Activated CD4-positive, alpha-beta T cell treated with anti-CD3 and anti-CD28 coated beads for 36 hours (primary cell): ENCODE measurements at regions of chr1 and their contacts with region 1.

Region 1: GRCh38 chr1:206865013-206865671 is at the start of gene IL20:
- DNase-seq: peak; percentile 95
- ATAC-seq: peak; percentile 96
- H3K4me3 Mint-ChIP-seq: no peak within 1 kb of the TSS
- H3K27ac Mint-ChIP-seq: no peak within 1 kb of the TSS
- H3K4me1 Mint-ChIP-seq: peaks cover 18% of the 10 kb centered on the region
- H3K27me3 Mint-ChIP-seq: peaks cover 8% of the 10 kb centered on the region
- total RNA-seq, gene IL20: not detected

Region 2: GRCh38 chr1:206847337-206847834 is 17.8 kb before region 1 on chr1:
- CTCF ChIA-PET with region 1: interaction called, 11 read pairs
- POLR2A ChIA-PET with region 1: no interaction called
- intact Hi-C with region 1: no loop called
- DNase-seq: no peak
- ATAC-seq: no peak
- H3K4me3 Mint-ChIP-seq: no peak overlapping the region
- H3K27ac Mint-ChIP-seq: no peak overlapping the region
- H3K4me1 Mint-ChIP-seq: no peaks in the 10 kb centered on the region
- H3K27me3 Mint-ChIP-seq: no peaks in the 10 kb centered on the region

Region 3: GRCh38 chr1:206878456-206878855 is 13.3 kb after region 1 on chr1:
- CTCF ChIA-PET with region 1: interaction called, 20 read pairs
- POLR2A ChIA-PET with region 1: no interaction called
- intact Hi-C with region 1: no loop called
- DNase-seq: no peak
- ATAC-seq: no peak
- H3K4me3 Mint-ChIP-seq: no peak overlapping the region
- H3K27ac Mint-ChIP-seq: no peak overlapping the region
- H3K4me1 Mint-ChIP-seq: peaks cover 10% of the 10 kb centered on the region
- H3K27me3 Mint-ChIP-seq: no peaks in the 10 kb centered on the region

Region 4: GRCh38 chr1:206885341-206886060 is 20.4 kb after region 1 on chr1:
- CTCF ChIA-PET with region 1: interaction called, 13 read pairs
- POLR2A ChIA-PET with region 1: no interaction called
- intact Hi-C with region 1: no loop called
- DNase-seq: no peak
- ATAC-seq: no peak
- H3K4me3 Mint-ChIP-seq: no peak overlapping the region
- H3K27ac Mint-ChIP-seq: no peak overlapping the region
- H3K4me1 Mint-ChIP-seq: peaks cover 22% of the 10 kb centered on the region
- H3K27me3 Mint-ChIP-seq: peaks cover 4% of the 10 kb centered on the region

Region 5: GRCh38 chr1:206895830-206896242 is 30.7 kb after region 1 on chr1:
- CTCF ChIA-PET with region 1: interaction called, 10 read pairs
- POLR2A ChIA-PET with region 1: no interaction called
- intact Hi-C with region 1: no loop called
- DNase-seq: no peak
- ATAC-seq: no peak
- H3K4me3 Mint-ChIP-seq: no peak overlapping the region
- H3K27ac Mint-ChIP-seq: peak overlapping the region; percentile 49
- H3K4me1 Mint-ChIP-seq: peaks cover 88% of the 10 kb centered on the region
- H3K27me3 Mint-ChIP-seq: no peaks in the 10 kb centered on the region

Region 6: GRCh38 chr1:206905280-206906164 is 40.4 kb after region 1 on chr1:
- CTCF ChIA-PET with region 1: interaction called, 24 read pairs
- POLR2A ChIA-PET with region 1: no interaction called
- intact Hi-C with region 1: no loop called
- DNase-seq: peak; percentile 76
- ATAC-seq: peak; percentile 93
- H3K4me3 Mint-ChIP-seq: peak overlapping the region; percentile 27
- H3K27ac Mint-ChIP-seq: peak overlapping the region; percentile 87
- H3K4me1 Mint-ChIP-seq: peaks cover 86% of the 10 kb centered on the region
- H3K27me3 Mint-ChIP-seq: no peaks in the 10 kb centered on the region

Region 7: GRCh38 chr1:206935491-206936067 is 70.4 kb after region 1 on chr1:
- CTCF ChIA-PET with region 1: interaction called, 5 read pairs
- POLR2A ChIA-PET with region 1: no interaction called
- intact Hi-C with region 1: loop called in 1 of 2 experiments (anchors 1 kb)
- DNase-seq: peak; percentile 79
- ATAC-seq: peak; percentile 76
- H3K4me3 Mint-ChIP-seq: no peak overlapping the region
- H3K27ac Mint-ChIP-seq: no peak overlapping the region
- H3K4me1 Mint-ChIP-seq: peaks cover 23% of the 10 kb centered on the region
- H3K27me3 Mint-ChIP-seq: no peaks in the 10 kb centered on the region